ENCODE measurements at regions of chr1 and their contacts with region 1.

Region 1: DNA sequence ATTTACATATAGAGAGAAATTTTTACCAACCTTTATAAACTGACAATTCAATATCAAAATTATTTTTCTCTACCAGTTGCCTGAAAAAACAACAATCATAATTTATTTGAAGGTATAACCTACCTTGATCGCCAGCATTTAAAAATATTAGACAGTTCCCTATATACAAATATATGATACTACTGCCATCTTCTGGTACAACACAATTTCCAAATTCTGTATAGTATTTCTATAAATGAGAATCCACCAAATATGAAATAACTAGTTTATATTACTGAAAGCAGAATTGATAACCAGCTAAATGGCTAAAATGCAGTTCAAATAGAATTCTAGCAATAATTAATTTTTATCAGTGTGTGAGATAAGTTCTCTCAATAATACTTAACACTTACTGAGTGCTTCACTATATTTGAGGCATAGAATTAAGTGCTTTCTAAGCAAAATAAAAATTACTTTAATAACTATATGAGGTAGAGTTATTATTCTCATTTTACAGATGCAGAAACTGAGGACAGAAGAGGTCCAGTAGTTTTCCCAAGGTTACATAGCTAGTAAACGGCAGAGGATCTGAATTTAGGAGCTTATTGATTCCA is 75.6 kb downstream of the PIGK start:
- DNase-seq: no peak
- H3K4me3 Mint-ChIP-seq: no peak overlapping the region
- H3K27ac Mint-ChIP-seq: no peak overlapping the region
- H3K4me1 Mint-ChIP-seq: no peaks in the 10 kb centered on the region
- H3K27me3 Mint-ChIP-seq: no peaks in the 10 kb centered on the region
- CTCF ChIP-seq: peak; percentile 44

Region 2: DNA sequence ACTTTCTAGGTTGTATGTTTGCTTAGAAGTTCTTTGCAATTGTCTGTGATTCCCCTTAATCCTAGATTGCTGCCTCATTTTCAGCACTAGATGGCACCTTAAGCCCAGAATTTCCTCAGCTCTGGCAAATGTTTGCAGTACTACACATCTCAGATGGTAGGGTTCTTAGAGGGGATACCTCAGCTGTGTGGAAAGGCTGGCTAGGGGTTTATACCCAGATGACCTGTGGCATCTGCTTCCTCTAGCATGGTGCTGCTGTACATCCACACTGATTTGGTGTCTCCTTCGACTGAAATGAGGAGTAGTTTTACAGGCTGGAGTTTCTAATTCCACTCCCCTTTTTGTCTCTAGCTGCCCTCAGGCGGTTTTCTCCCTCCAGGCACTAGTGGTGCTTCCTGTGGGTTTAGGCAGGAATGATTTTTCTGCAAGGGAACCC is 1234.9 kb before region 1 on chr1:
- CTCF ChIA-PET with region 1: no interaction called
- intact Hi-C with region 1: loop called (anchors 5 kb)
- DNase-seq: peak; percentile 39
- H3K4me3 Mint-ChIP-seq: no peak overlapping the region
- H3K27ac Mint-ChIP-seq: no peak overlapping the region
- H3K4me1 Mint-ChIP-seq: no peaks in the 10 kb centered on the region
- H3K27me3 Mint-ChIP-seq: no peaks in the 10 kb centered on the region
- CTCF ChIP-seq: peak; percentile 23

Region 3: DNA sequence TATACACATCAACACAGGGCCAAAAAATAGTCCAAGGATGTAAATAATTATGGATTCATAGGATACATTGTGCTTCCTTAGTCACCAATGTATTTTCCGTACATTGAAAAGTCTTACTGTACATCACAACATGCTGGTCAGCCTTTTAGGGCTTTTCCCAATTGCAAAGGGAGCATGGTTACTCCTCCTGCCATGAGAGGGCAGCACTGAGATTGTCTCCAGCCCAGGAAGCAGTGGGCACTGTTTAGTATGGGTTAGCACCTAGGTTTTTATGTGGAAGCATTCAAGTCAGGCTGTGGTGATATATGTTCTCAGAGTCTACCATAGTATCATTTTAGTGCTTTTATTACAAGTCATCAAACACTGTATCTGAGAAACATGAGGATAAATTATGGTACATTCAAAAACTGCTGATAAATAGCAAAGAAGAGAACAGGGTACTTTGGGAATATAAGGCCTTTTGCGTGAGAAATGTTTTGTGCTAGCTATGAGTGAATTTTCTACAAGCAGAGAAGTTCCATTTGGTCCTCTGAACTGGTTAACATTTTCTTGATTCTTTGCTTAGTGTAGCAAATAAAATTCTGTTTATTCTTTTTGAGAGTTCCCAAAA is 242.4 kb before region 1 on chr1:
- CTCF ChIA-PET with region 1: no interaction called
- intact Hi-C with region 1: loop called (anchors 5 kb)
- DNase-seq: peak; percentile 60
- H3K4me3 Mint-ChIP-seq: no peak overlapping the region
- H3K27ac Mint-ChIP-seq: no peak overlapping the region
- H3K4me1 Mint-ChIP-seq: no peaks in the 10 kb centered on the region
- H3K27me3 Mint-ChIP-seq: peaks cover 9% of the 10 kb centered on the region
- CTCF ChIP-seq: peak; percentile 56

Region 4: GRCh38 chr1:77156214-77156613 is 12.6 kb after region 1 on chr1:
- CTCF ChIA-PET with region 1: no interaction called
- intact Hi-C with region 1: no loop called
- DNase-seq: no peak
- H3K4me3 Mint-ChIP-seq: no peak overlapping the region
- H3K27ac Mint-ChIP-seq: no peak overlapping the region
- H3K4me1 Mint-ChIP-seq: no peaks in the 10 kb centered on the region
- H3K27me3 Mint-ChIP-seq: no peaks in the 10 kb centered on the region
- CTCF ChIP-seq: no peak

Region 5: GRCh38 chr1:77416692-77417450 is 273.2 kb after region 1 on chr1:
- CTCF ChIA-PET with region 1: no interaction called
- intact Hi-C with region 1: loop called (anchors 1 kb)
- DNase-seq: peak; percentile 58
- H3K4me3 Mint-ChIP-seq: no peak overlapping the region
- H3K27ac Mint-ChIP-seq: no peak overlapping the region
- H3K4me1 Mint-ChIP-seq: peaks cover 29% of the 10 kb centered on the region
- H3K27me3 Mint-ChIP-seq: no peaks in the 10 kb centered on the region
- CTCF ChIP-seq: peak; percentile 36

Region 6: GRCh38 chr1:77683160-77684148 is 539.8 kb after region 1 on chr1:
- CTCF ChIA-PET with region 1: no interaction called
- intact Hi-C with region 1: loop called (anchors 1 kb)
- DNase-seq: peak; percentile 95
- H3K4me3 Mint-ChIP-seq: peak overlapping the region; percentile 82
- H3K27ac Mint-ChIP-seq: peak overlapping the region; percentile 94
- H3K4me1 Mint-ChIP-seq: peaks cover 29% of the 10 kb centered on the region
- H3K27me3 Mint-ChIP-seq: no peaks in the 10 kb centered on the region
- CTCF ChIP-seq: peak; percentile 83

Measured in Calu3 (cell line).